GM23248 (cell line): ENCODE measurements at regions of chr1 and their contacts with region 1.

Region 1: GRCh38 chr1:117886101-117886795 is 43.2 kb downstream of the GDAP2 start:
- DNase-seq: peak; percentile 58
- H3K4me3 ChIP-seq: no peak overlapping the region
- H3K27ac ChIP-seq: peak overlapping the region; percentile 49
- H3K4me1 ChIP-seq: peaks cover 38% of the 10 kb centered on the region
- H3K27me3 ChIP-seq: no peaks in the 10 kb centered on the region

Region 2: GRCh38 chr1:117534995-117535467 is 351.2 kb before region 1 on chr1:
- in situ Hi-C with region 1: loop called (anchors 10 kb)
- DNase-seq: peak; percentile 87
- H3K4me3 ChIP-seq: 0 out of 2 replicates have a peak overlapping the region, but pooled peaks have one; percentile 34
- H3K27ac ChIP-seq: no peak overlapping the region
- H3K4me1 ChIP-seq: no peaks in the 10 kb centered on the region
- H3K27me3 ChIP-seq: no peaks in the 10 kb centered on the region

Region 3: GRCh38 chr1:117605774-117606648 is 280.2 kb before region 1 on chr1 and contains the start of gene TENT5C:
- in situ Hi-C with region 1: no loop called
- DNase-seq: peak; percentile 99
- H3K4me3 ChIP-seq: peak within 1 kb of the TSS; percentile 81
- H3K27ac ChIP-seq: no peak within 1 kb of the TSS
- H3K4me1 ChIP-seq: no peaks in the 10 kb centered on the region
- H3K27me3 ChIP-seq: 0 out of 2 replicates have a peak, but pooled peaks cover 10% of the 10 kb centered on the region
- total RNA-seq, gene TENT5C: 0.25 TPM in 1 of 2 replicates, not detected in the other

Region 4: GRCh38 chr1:118275472-118276115 is 389.3 kb after region 1 on chr1:
- in situ Hi-C with region 1: no loop called
- DNase-seq: no peak
- H3K4me3 ChIP-seq: no peak overlapping the region
- H3K27ac ChIP-seq: no peak overlapping the region
- H3K4me1 ChIP-seq: no peaks in the 10 kb centered on the region
- H3K27me3 ChIP-seq: no peaks in the 10 kb centered on the region